Activated B cell treated with CpG ODN at 0.5 μM for 24 hours (primary cell): ENCODE measurements at regions of chr7 and their contacts with region 1.

Region 1: DNA sequence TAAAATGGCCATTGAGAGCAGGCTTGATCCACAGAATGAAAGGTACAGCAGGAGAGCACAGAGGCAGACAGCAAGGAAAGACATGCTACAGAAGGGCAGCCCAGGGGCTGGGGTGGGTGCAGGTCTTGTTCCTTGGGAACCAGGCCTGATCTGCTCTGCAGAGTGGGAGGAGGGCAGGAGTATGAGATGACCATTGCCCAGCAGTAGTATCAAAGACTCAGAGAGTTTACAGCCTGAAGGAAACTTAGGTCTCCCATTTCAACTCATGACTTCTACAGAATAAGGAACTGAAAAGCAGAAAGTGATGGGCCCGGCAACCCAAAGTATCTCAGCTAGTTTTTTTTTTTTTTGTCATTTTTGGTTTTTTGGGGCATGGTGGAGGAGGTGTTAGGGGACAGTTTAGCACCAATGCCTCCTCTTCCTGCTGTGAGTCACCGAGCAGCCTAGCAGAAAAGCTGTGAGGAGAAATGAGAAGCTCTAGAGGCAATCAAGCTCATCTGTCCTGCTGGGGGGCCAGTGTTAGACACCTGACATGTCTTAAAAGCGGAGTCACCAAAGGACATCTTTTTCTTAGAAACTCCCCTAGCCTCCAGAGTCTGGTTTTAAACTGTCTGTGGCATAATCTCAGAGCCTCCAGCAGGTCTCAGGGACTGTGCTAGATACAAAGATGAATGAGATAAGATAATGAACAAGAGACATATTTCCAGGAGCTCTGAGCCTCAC is 34.3 kb upstream of the HERPUD2 start:
- DNase-seq: peak; percentile 53
- ATAC-seq: peak; percentile 81
- H3K4me3 Mint-ChIP-seq: peak overlapping the region; percentile 70
- H3K27ac Mint-ChIP-seq: peak overlapping the region; percentile 93
- H3K4me1 Mint-ChIP-seq: peaks cover 93% of the 10 kb centered on the region
- H3K27me3 Mint-ChIP-seq: no peaks in the 10 kb centered on the region
- CTCF ChIP-seq: no peak

Region 2: GRCh38 chr7:34309116-34309515 is 1420.1 kb before region 1 on chr7:
- CTCF ChIA-PET with region 1: no interaction called
- POLR2A ChIA-PET with region 1: no interaction called
- intact Hi-C with region 1: no loop called
- DNase-seq: no peak
- ATAC-seq: no peak
- H3K4me3 Mint-ChIP-seq: no peak overlapping the region
- H3K27ac Mint-ChIP-seq: no peak overlapping the region
- H3K4me1 Mint-ChIP-seq: no peaks in the 10 kb centered on the region
- H3K27me3 Mint-ChIP-seq: no peaks in the 10 kb centered on the region
- CTCF ChIP-seq: no peak

Region 3: GRCh38 chr7:34354899-34355298 is 1374.3 kb before region 1 on chr7:
- CTCF ChIA-PET with region 1: no interaction called
- POLR2A ChIA-PET with region 1: no interaction called
- intact Hi-C with region 1: no loop called
- DNase-seq: no peak
- ATAC-seq: no peak
- H3K4me3 Mint-ChIP-seq: no peak overlapping the region
- H3K27ac Mint-ChIP-seq: no peak overlapping the region
- H3K4me1 Mint-ChIP-seq: no peaks in the 10 kb centered on the region
- H3K27me3 Mint-ChIP-seq: no peaks in the 10 kb centered on the region
- CTCF ChIP-seq: no peak

Region 4: DNA sequence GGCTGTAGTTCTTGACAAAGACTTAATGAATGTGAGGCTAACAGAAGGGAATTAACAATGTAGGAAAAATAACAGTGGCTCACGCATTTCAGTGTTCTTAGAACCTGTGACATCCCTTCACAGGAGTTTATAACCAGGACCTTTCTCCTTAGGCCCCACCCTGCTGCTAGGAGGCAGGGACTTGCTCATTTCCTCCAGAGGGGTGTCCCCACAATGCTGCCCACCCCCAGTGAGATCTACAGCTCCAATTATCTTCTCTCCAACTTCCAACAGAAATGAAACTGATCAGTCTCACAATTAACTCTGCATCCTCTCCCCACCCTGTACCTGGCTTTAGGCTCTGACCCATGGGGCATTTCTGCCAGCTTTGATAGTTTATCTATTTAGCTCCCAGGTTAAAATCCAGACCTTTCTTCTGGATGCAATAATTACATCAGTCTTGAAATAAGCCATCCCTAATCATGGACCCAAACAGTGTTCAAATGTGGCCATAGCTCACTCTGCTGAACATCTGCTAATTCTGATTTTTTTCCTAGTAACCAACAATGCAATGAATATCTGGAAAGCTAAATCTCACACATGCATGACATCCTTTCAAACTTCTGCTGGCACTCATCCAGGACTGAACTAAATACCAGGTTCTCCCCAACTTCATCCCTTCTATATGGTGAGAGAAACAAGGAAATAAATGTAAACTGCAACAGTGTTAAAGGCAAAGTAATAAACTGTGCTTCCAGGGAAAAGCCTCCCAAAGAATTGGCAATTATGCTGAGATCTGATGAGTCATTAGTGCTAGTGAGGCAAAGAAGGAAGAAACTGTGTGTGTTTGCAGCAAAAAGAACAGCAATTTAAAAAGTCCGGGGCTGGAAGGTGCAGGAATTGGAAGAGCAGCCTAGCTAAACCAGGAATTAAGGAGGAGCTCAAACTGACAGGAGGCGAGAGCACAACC is 98.9 kb before region 1 on chr7:
- CTCF ChIA-PET with region 1: no interaction called
- POLR2A ChIA-PET with region 1: no interaction called
- intact Hi-C with region 1: no loop called
- DNase-seq: no peak
- ATAC-seq: no peak
- H3K4me3 Mint-ChIP-seq: no peak overlapping the region
- H3K27ac Mint-ChIP-seq: no peak overlapping the region
- H3K4me1 Mint-ChIP-seq: no peaks in the 10 kb centered on the region
- H3K27me3 Mint-ChIP-seq: no peaks in the 10 kb centered on the region
- CTCF ChIP-seq: no peak

Region 5: GRCh38 chr7:35707422-35707821 is 21.8 kb before region 1 on chr7:
- CTCF ChIA-PET with region 1: interaction called, 96 read pairs
- POLR2A ChIA-PET with region 1: interaction called, 17 read pairs
- intact Hi-C with region 1: loop called (anchors 1 kb)
- DNase-seq: no peak
- ATAC-seq: no peak
- H3K4me3 Mint-ChIP-seq: no peak overlapping the region
- H3K27ac Mint-ChIP-seq: no peak overlapping the region
- H3K4me1 Mint-ChIP-seq: peaks cover 11% of the 10 kb centered on the region
- H3K27me3 Mint-ChIP-seq: no peaks in the 10 kb centered on the region
- CTCF ChIP-seq: no peak

Region 6: DNA sequence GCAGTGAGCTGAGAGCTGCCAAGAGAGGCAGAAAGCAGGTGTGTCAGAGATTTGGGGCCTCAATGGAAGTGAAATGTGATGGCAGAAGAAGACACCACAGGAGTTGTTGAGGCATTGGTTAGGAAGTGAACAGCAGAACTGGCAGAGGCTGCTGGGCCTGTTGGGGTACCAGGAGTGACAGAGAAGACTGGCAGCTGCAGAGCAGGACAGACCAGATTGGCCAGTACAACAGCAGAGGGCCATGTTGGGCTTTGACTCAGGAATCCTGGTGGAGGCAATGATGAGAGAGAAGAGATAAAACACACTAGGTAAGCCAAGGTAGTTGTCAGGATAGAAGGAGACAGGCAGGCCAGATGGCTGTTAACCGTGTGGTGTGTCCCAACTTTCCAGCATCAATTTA is 14.4 kb before region 1 on chr7:
- CTCF ChIA-PET with region 1: interaction called, 96 read pairs
- POLR2A ChIA-PET with region 1: interaction called, 17 read pairs
- intact Hi-C with region 1: loop called (anchors 1 kb)
- DNase-seq: no peak
- ATAC-seq: peak; percentile 57
- H3K4me3 Mint-ChIP-seq: no peak overlapping the region
- H3K27ac Mint-ChIP-seq: peak overlapping the region; percentile 59
- H3K4me1 Mint-ChIP-seq: peaks cover 31% of the 10 kb centered on the region
- H3K27me3 Mint-ChIP-seq: no peaks in the 10 kb centered on the region
- CTCF ChIP-seq: no peak